ENCODE measurements at regions of chr1 and their contacts with region 1.

Region 1: GRCh38 chr1:219476116-219476515 is 136.8 kb downstream of the ZC3H11B start:
- DNase-seq: no peak
- ATAC-seq: no peak
- H3K4me3 ChIP-seq: no peak overlapping the region
- H3K4me3 Mint-ChIP-seq: no peak overlapping the region
- H3K27ac ChIP-seq: no peak overlapping the region
- H3K27ac Mint-ChIP-seq: no peak overlapping the region
- H3K4me1 ChIP-seq: no peaks in the 10 kb centered on the region
- H3K4me1 Mint-ChIP-seq: peaks cover 0 to 4% (median 0%) of the 10 kb centered on the region in 7 donors
- H3K27me3 ChIP-seq: no peaks in the 10 kb centered on the region
- H3K27me3 Mint-ChIP-seq: peaks cover 0 to 4% (median 0%) of the 10 kb centered on the region in 5 donors

Region 2: DNA sequence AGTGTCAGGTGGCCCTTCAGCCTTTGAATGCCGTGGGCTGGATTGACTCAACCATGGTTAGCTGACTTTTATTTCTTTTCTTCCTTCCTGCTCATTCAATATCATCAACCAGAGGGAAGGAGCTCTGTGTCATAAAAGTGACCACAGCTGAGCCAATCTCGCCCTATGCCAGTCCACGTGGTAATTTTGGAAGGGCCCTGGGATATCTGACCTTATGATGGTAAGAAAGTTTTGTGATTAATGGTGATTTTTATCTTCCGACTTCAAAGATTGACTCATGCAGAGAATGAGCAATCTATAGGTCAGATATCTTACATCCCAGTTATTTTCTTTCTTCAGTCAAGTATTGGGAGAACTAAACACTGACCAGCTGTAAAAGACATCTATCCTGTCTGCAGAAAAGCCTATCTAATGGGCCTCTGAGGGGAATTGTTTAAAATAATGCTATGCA is 33.5 kb before region 1 on chr1:
- CTCF ChIA-PET with region 1: no interaction called
- POLR2A ChIA-PET with region 1: no interaction called
- intact Hi-C with region 1: loop called in 1 of 2 experiments (anchors 1 kb)
- DNase-seq: no peak
- ATAC-seq: no peak
- H3K4me3 ChIP-seq: no peak overlapping the region
- H3K4me3 Mint-ChIP-seq: no peak overlapping the region
- H3K27ac ChIP-seq: no peak overlapping the region
- H3K27ac Mint-ChIP-seq: no peak overlapping the region
- H3K4me1 ChIP-seq: no peaks in the 10 kb centered on the region
- H3K4me1 Mint-ChIP-seq: no peaks in the 10 kb centered on the region
- H3K27me3 ChIP-seq: no peaks in the 10 kb centered on the region
- H3K27me3 Mint-ChIP-seq: peaks cover 0 to 8% (median 0%) of the 10 kb centered on the region in 5 donors

Region 3: DNA sequence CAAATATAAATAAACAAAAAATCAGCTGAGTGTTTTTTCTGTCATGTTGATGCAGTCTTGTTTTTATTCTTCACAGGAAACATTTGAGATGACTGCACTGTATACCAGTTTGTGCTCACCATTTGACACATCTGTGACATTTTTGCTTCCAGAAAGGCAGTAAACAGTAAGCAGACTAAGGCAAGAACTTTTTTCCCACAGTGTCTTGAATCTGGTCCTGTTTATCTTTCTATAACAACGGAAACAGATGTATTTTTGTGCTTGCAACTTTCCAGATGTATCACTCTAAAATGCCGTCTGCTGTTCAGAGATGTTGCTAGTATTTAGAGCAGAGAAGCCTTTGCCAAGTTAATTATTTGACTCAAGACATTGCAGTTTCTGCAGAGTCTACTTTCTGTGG is 31.3 kb after region 1 on chr1:
- CTCF ChIA-PET with region 1: no interaction called
- POLR2A ChIA-PET with region 1: no interaction called
- intact Hi-C with region 1: no loop called
- DNase-seq: no peak
- ATAC-seq: no peak
- H3K4me3 ChIP-seq: no peak overlapping the region
- H3K4me3 Mint-ChIP-seq: no peak overlapping the region
- H3K27ac ChIP-seq: no peak overlapping the region
- H3K27ac Mint-ChIP-seq: no peak overlapping the region
- H3K4me1 ChIP-seq: no peaks in the 10 kb centered on the region
- H3K4me1 Mint-ChIP-seq: no peaks in the 10 kb centered on the region
- H3K27me3 ChIP-seq: no peaks in the 10 kb centered on the region
- H3K27me3 Mint-ChIP-seq: peaks cover 0 to 5% (median 0%) of the 10 kb centered on the region in 5 donors

Measured in naive thymus-derived CD4-positive, alpha-beta T cell (primary cell).